Activated CD4-positive, alpha-beta T cell treated with anti-CD3 and anti-CD28 coated beads for 36 hours (primary cell): ENCODE measurements at regions of chr6 and their contacts with region 1.

Region 1: GRCh38 chr6:169751242-169752073 is at the starts of genes DYNLT2 and ERMARD:
- DNase-seq: peak; percentile 96
- ATAC-seq: peak; percentile 96
- H3K4me3 Mint-ChIP-seq: peak within 1 kb of the TSS; percentile 95
- H3K27ac Mint-ChIP-seq: peak within 1 kb of the TSS; percentile 97
- H3K4me1 Mint-ChIP-seq: peaks cover 23% of the 10 kb centered on the region
- H3K27me3 Mint-ChIP-seq: no peaks in the 10 kb centered on the region
- total RNA-seq, gene DYNLT2: 2.0 to 2.4 TPM
- total RNA-seq, gene ERMARD: 19.2 to 30.2 TPM

Region 2: GRCh38 chr6:169212897-169213813 is 538.3 kb before region 1 on chr6:
- CTCF ChIA-PET with region 1: no interaction called
- POLR2A ChIA-PET with region 1: no interaction called
- intact Hi-C with region 1: loop called (anchors 1 to 2 kb)
- DNase-seq: peak; percentile 95
- ATAC-seq: peak; percentile 100
- H3K4me3 Mint-ChIP-seq: peak overlapping the region; percentile 54
- H3K27ac Mint-ChIP-seq: peak overlapping the region; percentile 59
- H3K4me1 Mint-ChIP-seq: peaks cover 16% of the 10 kb centered on the region
- H3K27me3 Mint-ChIP-seq: no peaks in the 10 kb centered on the region

Region 3: GRCh38 chr6:170554013-170554795 is 802.7 kb after region 1 on chr6 and contains the start of gene TBP:
- CTCF ChIA-PET with region 1: no interaction called
- POLR2A ChIA-PET with region 1: no interaction called
- intact Hi-C with region 1: loop called (anchors 1 kb)
- DNase-seq: peak; percentile 98
- ATAC-seq: peak; percentile 96
- H3K4me3 Mint-ChIP-seq: no peak within 1 kb of the TSS
- H3K27ac Mint-ChIP-seq: no peak within 1 kb of the TSS
- H3K4me1 Mint-ChIP-seq: peaks cover 36% of the 10 kb centered on the region
- H3K27me3 Mint-ChIP-seq: no peaks in the 10 kb centered on the region
- total RNA-seq, gene TBP: 23.9 to 27.4 TPM

Region 4: GRCh38 chr6:170584181-170584953 is 832.9 kb after region 1 on chr6 and contains the start of gene PDCD2:
- CTCF ChIA-PET with region 1: no interaction called
- POLR2A ChIA-PET with region 1: no interaction called
- intact Hi-C with region 1: loop called in 1 of 2 experiments (anchors 1 kb)
- DNase-seq: peak; percentile 96
- ATAC-seq: peak; percentile 96
- H3K4me3 Mint-ChIP-seq: peak within 1 kb of the TSS; percentile 91
- H3K27ac Mint-ChIP-seq: peak within 1 kb of the TSS; percentile 95
- H3K4me1 Mint-ChIP-seq: peaks cover 30% of the 10 kb centered on the region
- H3K27me3 Mint-ChIP-seq: no peaks in the 10 kb centered on the region
- total RNA-seq, gene PDCD2: 133 to 152 TPM